MCF 10A (cell line): ENCODE measurements at regions of chr12 and their contacts with region 1.

Region 1: DNA sequence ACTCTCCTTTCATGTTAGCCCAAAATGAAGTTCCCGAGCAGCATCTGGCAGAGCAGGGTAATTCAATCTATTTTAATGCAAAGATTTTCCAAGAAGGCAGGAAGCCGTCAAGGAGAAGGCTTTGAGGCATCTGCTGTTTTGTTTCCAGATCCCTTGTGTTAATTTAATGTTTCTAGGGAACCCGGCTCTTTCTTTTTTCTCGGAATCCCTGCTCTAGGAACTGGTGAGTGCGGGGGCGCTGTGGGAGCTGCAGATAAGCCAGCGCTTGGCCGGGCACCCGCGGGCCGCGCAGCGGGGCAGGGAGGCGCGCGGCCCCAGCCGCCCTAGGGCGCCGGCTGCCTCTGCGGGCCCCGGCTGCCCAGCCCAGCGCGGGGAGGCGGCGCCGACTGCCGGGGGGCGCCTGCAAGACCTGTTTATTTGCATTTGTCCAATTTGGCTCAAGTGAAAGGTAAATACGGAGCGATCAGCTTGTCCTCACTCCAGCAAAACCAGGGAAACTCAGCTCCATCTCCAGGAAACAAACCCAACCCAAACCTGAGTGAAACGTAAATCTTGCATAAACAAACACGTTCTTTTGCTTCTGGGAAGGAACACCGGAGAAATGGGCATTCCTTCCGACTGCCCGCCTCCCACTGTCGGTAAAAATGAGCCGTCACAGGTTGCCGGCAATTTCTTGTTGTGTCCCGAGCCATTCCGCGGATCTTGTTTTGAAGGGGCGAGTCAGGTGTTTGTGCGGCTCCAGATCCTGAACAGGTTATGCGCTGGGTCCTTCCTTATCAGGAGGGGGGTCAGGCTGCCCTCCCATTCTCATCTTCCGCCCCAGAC is 65.1 kb downstream of the CRADD start:
- DNase-seq: peak; percentile 78
- H3K4me3 Mint-ChIP-seq: peak overlapping the region; percentile 79
- H3K27ac Mint-ChIP-seq: peak overlapping the region; percentile 95
- H3K4me1 Mint-ChIP-seq: peaks cover 38% of the 10 kb centered on the region
- H3K27me3 Mint-ChIP-seq: no peaks in the 10 kb centered on the region
- CTCF ChIP-seq: peak; percentile 38

Region 2: DNA sequence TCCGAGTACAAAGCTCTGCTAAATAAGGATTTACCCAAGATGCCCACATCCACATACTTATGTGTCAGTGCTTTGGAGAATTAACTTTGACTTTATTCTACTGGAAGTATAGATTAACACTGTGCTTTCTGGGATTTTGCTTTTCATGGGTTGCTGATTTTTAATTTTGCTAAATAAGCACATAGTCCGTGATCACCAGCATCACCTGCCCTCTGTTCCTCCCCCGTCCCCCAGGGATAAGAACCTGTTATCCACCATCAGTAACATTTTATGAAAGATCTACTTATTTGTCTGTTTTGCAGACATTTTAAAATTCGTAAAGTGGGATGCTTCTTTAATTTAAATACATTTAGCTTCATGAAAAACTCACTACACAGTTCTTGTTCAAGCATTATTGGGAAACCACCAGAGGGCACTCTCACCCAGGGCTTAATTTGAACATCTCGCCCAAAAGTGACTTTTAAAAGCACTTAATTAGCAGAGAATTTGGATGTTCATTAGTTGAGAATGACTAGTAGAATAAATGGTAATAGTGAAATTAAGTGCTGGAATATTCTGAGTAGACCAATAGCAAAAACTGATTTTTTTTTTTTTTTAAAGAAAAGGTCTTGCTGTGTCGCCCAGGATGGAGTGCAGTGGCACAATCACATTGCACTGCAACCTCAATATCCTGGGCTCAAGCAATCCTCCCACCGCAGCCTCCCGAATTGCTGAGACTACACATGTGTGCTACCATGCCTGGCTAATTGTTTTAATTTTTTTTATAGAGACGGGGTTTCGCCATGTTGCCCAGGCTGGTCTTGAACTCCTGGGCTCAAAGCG is 239.3 kb before region 1 on chr12:
- CTCF ChIA-PET with region 1: interaction called, 6 read pairs
- POLR2A ChIA-PET with region 1: no interaction called
- intact Hi-C with region 1: loop called (anchors 2 kb)
- DNase-seq: peak; percentile 54
- H3K4me3 Mint-ChIP-seq: no peak overlapping the region
- H3K27ac Mint-ChIP-seq: no peak overlapping the region
- H3K4me1 Mint-ChIP-seq: no peaks in the 10 kb centered on the region
- H3K27me3 Mint-ChIP-seq: no peaks in the 10 kb centered on the region
- CTCF ChIP-seq: peak; percentile 81

Region 3: DNA sequence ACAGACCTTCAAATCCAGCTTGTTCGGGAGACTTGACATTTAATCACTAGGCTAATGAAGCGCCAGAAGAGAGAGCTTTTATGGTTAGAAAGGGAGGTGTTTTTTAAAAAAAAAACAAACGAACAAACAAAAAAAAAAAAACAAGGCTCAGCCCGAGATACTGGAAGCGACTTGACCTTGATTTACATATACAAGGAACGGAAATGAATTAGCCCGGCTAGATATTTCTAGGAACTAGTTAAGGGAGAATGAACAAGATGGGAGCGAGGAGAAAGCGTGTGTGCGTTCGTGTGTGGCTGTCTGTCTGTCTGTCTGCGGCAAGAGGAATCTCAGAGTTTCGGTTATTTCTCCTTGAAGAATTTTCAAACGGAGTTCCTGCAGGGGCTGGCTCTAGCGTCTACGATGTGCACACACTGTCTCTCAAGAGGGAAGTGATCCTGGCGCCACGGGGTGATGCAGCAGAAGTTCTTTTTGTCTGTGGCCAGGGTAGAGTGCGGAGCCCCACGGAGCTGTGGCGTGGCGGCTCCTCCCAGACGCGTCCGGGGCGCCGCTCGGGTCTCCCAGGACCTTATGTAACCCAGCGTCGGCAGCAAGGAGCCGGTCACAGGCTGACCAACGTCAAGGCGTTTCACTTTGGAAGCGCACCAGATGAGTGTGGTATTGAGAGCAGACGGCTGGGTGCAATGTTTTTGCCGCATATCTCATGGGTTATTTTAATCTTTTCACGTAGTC is 151.0 kb before region 1 on chr12:
- CTCF ChIA-PET with region 1: interaction called, 7 read pairs
- POLR2A ChIA-PET with region 1: interaction called, 22 read pairs
- intact Hi-C with region 1: no loop called
- DNase-seq: peak; percentile 78
- H3K4me3 Mint-ChIP-seq: peak overlapping the region; percentile 95
- H3K27ac Mint-ChIP-seq: peak overlapping the region; percentile 93
- H3K4me1 Mint-ChIP-seq: peaks cover 4% of the 10 kb centered on the region
- H3K27me3 Mint-ChIP-seq: no peaks in the 10 kb centered on the region
- CTCF ChIP-seq: no peak

Region 4: DNA sequence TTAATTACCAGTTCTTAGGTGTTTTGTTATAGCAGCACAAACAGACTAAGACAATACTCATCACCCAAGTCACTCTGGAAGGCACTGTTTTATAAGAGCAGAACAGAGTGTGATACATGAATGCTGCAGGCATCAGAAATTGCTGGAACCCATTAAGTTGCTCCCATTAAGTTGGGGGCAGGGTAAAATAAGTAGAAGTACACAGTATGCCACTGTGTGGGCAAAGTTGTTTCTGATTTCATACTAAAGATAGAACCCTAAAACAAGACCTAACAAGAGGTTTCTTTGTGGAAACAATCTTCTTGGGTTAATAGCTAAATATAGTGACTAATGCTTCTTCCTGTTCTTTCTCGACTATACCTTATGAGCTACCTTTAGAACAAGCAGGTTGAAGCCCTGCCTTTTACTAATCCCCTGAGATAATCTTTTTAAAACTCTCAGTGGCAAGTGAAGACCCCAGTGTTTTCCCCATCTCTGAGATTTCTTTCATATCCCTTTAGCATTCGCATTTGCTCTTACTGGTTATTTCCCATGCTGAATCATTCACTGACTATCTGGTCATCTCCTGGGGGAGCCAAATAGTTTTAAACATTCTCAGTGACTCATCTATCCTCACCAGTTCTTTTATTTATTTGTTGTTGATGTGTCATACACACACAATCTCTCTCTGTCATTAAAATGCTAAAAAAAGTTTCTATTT is 117.6 kb before region 1 on chr12:
- CTCF ChIA-PET with region 1: no interaction called
- POLR2A ChIA-PET with region 1: interaction called, 6 read pairs
- intact Hi-C with region 1: loop called (anchors 1 kb)
- DNase-seq: peak; percentile 93
- H3K4me3 Mint-ChIP-seq: peak overlapping the region; percentile 4
- H3K27ac Mint-ChIP-seq: peak overlapping the region; percentile 85
- H3K4me1 Mint-ChIP-seq: peaks cover 18% of the 10 kb centered on the region
- H3K27me3 Mint-ChIP-seq: no peaks in the 10 kb centered on the region
- CTCF ChIP-seq: no peak

Region 5: DNA sequence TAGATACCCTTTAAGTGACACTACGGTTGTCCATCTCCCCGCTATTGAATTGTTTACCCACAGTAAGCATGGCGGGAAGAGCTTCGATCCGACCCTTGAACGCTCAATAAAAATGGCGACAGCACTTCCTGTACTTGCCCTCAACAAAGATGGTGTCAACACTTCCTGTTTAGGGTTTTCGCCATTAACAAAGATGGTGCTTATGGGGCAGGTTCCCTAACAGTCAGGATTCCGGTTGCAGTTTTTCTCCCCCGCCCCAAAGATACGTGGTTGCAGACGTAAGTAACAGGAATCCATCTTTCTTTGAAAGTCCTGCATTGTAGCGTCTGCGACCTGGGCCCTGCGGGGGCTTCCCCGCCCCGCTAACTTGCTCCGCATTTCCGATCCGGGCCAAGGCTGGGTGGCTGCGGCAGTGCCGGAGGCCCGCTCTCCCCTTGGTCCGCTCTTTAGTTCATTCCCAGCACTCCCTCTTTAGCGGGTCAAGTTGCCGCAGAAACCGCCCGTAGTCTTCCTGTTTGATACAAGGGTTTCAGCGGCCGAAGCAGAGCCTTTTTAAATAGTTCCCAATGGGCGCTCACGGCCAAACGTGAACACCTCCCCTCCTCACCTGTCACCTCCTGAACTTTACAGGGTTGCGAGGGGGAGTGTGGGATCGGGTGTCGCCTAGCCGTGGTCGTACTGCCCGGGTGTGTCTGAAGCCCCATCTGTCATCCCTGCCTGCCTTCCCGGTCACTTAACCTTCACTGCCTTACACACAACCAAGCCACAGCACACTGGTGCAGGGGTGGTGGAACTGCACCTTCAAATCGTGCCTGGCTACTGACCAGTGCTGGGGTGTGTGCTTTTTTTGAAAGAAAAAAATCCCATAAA is 64.9 kb before region 1 on chr12 and contains the start of gene CRADD:
- CTCF ChIA-PET with region 1: interaction called, 6 read pairs
- POLR2A ChIA-PET with region 1: interaction called, 21 read pairs
- intact Hi-C with region 1: loop called (anchors 1 kb)
- DNase-seq: peak; percentile 97
- H3K4me3 Mint-ChIP-seq: peak within 1 kb of the TSS; percentile 98
- H3K27ac Mint-ChIP-seq: peak within 1 kb of the TSS; percentile 100
- H3K4me1 Mint-ChIP-seq: peaks cover 21% of the 10 kb centered on the region
- H3K27me3 Mint-ChIP-seq: no peaks in the 10 kb centered on the region
- CTCF ChIP-seq: no peak
- total RNA-seq, gene CRADD: 15.4 and 17.1 TPM in 2 replicates

Region 6: DNA sequence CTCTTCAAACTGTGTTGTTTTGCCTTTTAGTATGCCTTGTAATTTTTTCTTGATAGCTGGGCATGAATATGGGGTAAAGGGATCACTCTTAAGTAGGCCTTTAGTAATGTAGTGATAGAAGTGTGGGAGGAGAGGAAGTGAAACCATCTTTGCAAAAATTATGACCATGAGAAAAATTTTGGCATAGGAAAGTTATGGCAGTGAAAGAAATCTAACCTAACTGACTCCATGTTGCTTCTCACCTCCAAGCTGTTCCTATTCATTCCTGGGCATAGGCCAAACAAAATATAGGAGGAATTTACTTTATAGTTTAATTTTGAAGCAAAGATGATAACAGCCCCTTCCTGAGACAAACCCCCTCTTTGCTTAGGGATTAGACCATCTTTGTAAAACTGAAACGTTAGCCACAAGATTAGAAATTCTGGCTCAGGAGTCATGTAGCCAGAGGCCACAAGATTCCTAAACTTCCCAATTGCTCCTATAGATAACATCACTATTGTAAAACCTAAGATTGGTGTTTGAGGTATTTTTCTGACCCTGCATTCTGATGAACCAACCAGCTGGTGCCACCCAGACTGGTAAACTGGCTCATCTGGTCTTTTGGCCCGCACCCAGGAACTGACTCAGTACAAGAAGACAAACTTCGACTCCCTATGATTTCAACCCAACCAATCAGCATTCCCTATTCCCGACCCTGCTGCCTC is 19.3 kb before region 1 on chr12:
- CTCF ChIA-PET with region 1: interaction called, 4 read pairs
- POLR2A ChIA-PET with region 1: interaction called, 11 read pairs
- intact Hi-C with region 1: no loop called
- DNase-seq: peak; percentile 91
- H3K4me3 Mint-ChIP-seq: peak overlapping the region; percentile 64
- H3K27ac Mint-ChIP-seq: no peak overlapping the region
- H3K4me1 Mint-ChIP-seq: peaks cover 12% of the 10 kb centered on the region
- H3K27me3 Mint-ChIP-seq: no peaks in the 10 kb centered on the region
- CTCF ChIP-seq: no peak

Region 7: GRCh38 chr12:93766796-93767523 is 24.6 kb after region 1 on chr12:
- CTCF ChIA-PET with region 1: interaction called, 10 read pairs
- POLR2A ChIA-PET with region 1: interaction called, 5 read pairs
- intact Hi-C with region 1: no loop called
- DNase-seq: peak; percentile 77
- H3K4me3 Mint-ChIP-seq: no peak overlapping the region
- H3K27ac Mint-ChIP-seq: no peak overlapping the region
- H3K4me1 Mint-ChIP-seq: peaks cover 26% of the 10 kb centered on the region
- H3K27me3 Mint-ChIP-seq: no peaks in the 10 kb centered on the region
- CTCF ChIP-seq: peak; percentile 57